Heart right ventricle (tissue), 16 donors: ENCODE measurements at regions of chr7 and their contacts with region 1.

Region 1: GRCh38 chr7:155796381-155797261 is 15.6 kb downstream of the SHH start:
- DNase-seq: peak; percentile 29 to 68
- ATAC-seq: peak; percentile 66 to 83 (median 74)
- H3K4me3 ChIP-seq: no peak overlapping the region
- H3K27ac ChIP-seq: no peak overlapping the region
- H3K4me1 ChIP-seq: peaks cover 0 to 9% (median 3%) of the 10 kb centered on the region in 9 donors
- H3K27me3 ChIP-seq: peaks cover 14 to 65% (median 60%) of the 10 kb centered on the region in 7 donors
- CTCF ChIP-seq: peak; percentile 76 to 94 (median 88)

Region 2: GRCh38 chr7:154857767-154858681 is 938.6 kb before region 1 on chr7:
- intact Hi-C with region 1: no loop called
- DNase-seq: no peak
- ATAC-seq: no peak
- H3K4me3 ChIP-seq: no peak overlapping the region
- H3K27ac ChIP-seq: no peak overlapping the region
- H3K4me1 ChIP-seq: no peaks in the 10 kb centered on the region
- H3K27me3 ChIP-seq: peaks cover 0 to 22% (median 0%) of the 10 kb centered on the region in 7 donors
- CTCF ChIP-seq: no peak

Region 3: GRCh38 chr7:155713384-155713783 is 83.2 kb before region 1 on chr7:
- intact Hi-C with region 1: no loop called
- DNase-seq: no peak
- ATAC-seq: peak in 2 of 8 donors; percentile 35 to 53
- H3K4me3 ChIP-seq: no peak overlapping the region
- H3K27ac ChIP-seq: no peak overlapping the region
- H3K4me1 ChIP-seq: peaks cover 0 to 15% (median 0%) of the 10 kb centered on the region in 9 donors
- H3K27me3 ChIP-seq: no peaks in the 10 kb centered on the region
- CTCF ChIP-seq: no peak

Region 4: GRCh38 chr7:155844019-155844453 is 47.4 kb after region 1 on chr7:
- intact Hi-C with region 1: no loop called
- DNase-seq: no peak
- ATAC-seq: peak in 2 of 8 donors; percentile 13 to 26
- H3K4me3 ChIP-seq: no peak overlapping the region
- H3K27ac ChIP-seq: no peak overlapping the region
- H3K4me1 ChIP-seq: no peaks in the 10 kb centered on the region
- H3K27me3 ChIP-seq: peaks cover 0 to 61% (median 30%) of the 10 kb centered on the region in 7 donors
- CTCF ChIP-seq: no peak

Region 5: DNA sequence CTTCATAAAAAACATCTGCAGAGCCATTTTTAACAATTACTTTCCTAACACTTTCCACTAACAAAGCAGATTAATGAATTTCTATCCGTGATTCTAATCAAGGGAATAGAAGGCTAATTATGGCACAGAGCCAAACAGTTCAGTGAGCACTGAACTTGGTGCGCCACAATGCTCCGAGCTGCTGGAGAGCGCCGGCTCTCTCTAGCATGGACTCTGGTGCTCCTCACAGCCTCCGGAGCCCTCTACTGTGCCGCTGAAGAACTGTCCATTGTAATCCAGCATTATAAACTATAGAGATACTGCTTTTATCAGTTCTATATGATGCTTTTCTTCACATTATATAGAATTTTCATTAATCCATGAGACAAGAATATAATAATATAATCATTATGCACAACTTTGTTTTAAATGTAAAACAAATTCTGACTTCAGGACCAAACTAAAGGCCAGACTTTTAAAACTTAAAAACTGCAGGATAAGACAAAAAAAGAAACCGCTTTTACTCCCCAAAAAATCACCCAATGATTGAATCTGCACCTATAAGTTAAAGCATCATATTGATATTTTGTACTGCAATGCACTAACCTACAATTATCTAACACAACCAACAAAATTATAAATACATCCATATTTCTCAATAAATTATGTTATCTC is 967.5 kb after region 1 on chr7:
- intact Hi-C with region 1: loop called in 4 of 10 experiments (anchors 5 to 10 kb)
- DNase-seq: peak; percentile 56 to 58
- ATAC-seq: peak; percentile 86 to 97 (median 92)
- H3K4me3 ChIP-seq: no peak overlapping the region
- H3K27ac ChIP-seq: no peak overlapping the region
- H3K4me1 ChIP-seq: peaks cover 0 to 5% (median 0%) of the 10 kb centered on the region in 9 donors
- H3K27me3 ChIP-seq: no peaks in the 10 kb centered on the region
- CTCF ChIP-seq: peak; percentile 33 to 81 (median 65)

Region 6: GRCh38 chr7:156816943-156817572 is 1020.4 kb after region 1 on chr7:
- intact Hi-C with region 1: loop called in 5 of 10 experiments (anchors 10 kb)
- DNase-seq: no peak
- ATAC-seq: no peak
- H3K4me3 ChIP-seq: no peak overlapping the region
- H3K27ac ChIP-seq: no peak overlapping the region
- H3K4me1 ChIP-seq: no peaks in the 10 kb centered on the region
- H3K27me3 ChIP-seq: no peaks in the 10 kb centered on the region
- CTCF ChIP-seq: peak in 7 of 9 donors; percentile 19 to 56 (median 46)

Region 7: GRCh38 chr7:156827587-156828203 is 1031.1 kb after region 1 on chr7:
- intact Hi-C with region 1: loop called in 5 of 10 experiments (anchors 5 to 10 kb)
- DNase-seq: no peak
- ATAC-seq: no peak
- H3K4me3 ChIP-seq: no peak overlapping the region
- H3K27ac ChIP-seq: no peak overlapping the region
- H3K4me1 ChIP-seq: peaks cover 0 to 3% (median 0%) of the 10 kb centered on the region in 9 donors
- H3K27me3 ChIP-seq: no peaks in the 10 kb centered on the region
- CTCF ChIP-seq: peak in 7 of 9 donors; percentile 39 to 66 (median 47)